Activated CD8-positive, alpha-beta T cell treated with anti-CD3 and anti-CD28 coated beads for 36 hours (primary cell): ENCODE measurements at regions of chr7 and their contacts with region 1.

Region 1: GRCh38 chr7:87416682-87417587 is 58.5 kb downstream of the ABCB4 start:
- DNase-seq: peak; percentile 85
- ATAC-seq: peak; percentile 66
- H3K4me3 Mint-ChIP-seq: no peak overlapping the region
- H3K27ac Mint-ChIP-seq: no peak overlapping the region
- H3K4me1 Mint-ChIP-seq: no peaks in the 10 kb centered on the region
- H3K27me3 Mint-ChIP-seq: peaks cover 1% of the 10 kb centered on the region
- CTCF ChIP-seq: peak; percentile 73

Region 2: GRCh38 chr7:86926732-86927131 is 490.2 kb before region 1 on chr7:
- CTCF ChIA-PET with region 1: interaction called, 13 read pairs
- POLR2A ChIA-PET with region 1: no interaction called
- intact Hi-C with region 1: loop called (anchors 10 kb)
- DNase-seq: peak; percentile 42
- ATAC-seq: peak; percentile 64
- H3K4me3 Mint-ChIP-seq: no peak overlapping the region
- H3K27ac Mint-ChIP-seq: no peak overlapping the region
- H3K4me1 Mint-ChIP-seq: peaks cover 9% of the 10 kb centered on the region
- H3K27me3 Mint-ChIP-seq: peaks cover 10% of the 10 kb centered on the region
- CTCF ChIP-seq: peak; percentile 77

Region 3: GRCh38 chr7:86939197-86939814 is 477.6 kb before region 1 on chr7:
- CTCF ChIA-PET with region 1: no interaction called
- POLR2A ChIA-PET with region 1: no interaction called
- intact Hi-C with region 1: loop called (anchors 10 kb)
- DNase-seq: peak; percentile 59
- ATAC-seq: peak; percentile 67
- H3K4me3 Mint-ChIP-seq: no peak overlapping the region
- H3K27ac Mint-ChIP-seq: no peak overlapping the region
- H3K4me1 Mint-ChIP-seq: no peaks in the 10 kb centered on the region
- H3K27me3 Mint-ChIP-seq: no peaks in the 10 kb centered on the region
- CTCF ChIP-seq: peak; percentile 81

Region 4: DNA sequence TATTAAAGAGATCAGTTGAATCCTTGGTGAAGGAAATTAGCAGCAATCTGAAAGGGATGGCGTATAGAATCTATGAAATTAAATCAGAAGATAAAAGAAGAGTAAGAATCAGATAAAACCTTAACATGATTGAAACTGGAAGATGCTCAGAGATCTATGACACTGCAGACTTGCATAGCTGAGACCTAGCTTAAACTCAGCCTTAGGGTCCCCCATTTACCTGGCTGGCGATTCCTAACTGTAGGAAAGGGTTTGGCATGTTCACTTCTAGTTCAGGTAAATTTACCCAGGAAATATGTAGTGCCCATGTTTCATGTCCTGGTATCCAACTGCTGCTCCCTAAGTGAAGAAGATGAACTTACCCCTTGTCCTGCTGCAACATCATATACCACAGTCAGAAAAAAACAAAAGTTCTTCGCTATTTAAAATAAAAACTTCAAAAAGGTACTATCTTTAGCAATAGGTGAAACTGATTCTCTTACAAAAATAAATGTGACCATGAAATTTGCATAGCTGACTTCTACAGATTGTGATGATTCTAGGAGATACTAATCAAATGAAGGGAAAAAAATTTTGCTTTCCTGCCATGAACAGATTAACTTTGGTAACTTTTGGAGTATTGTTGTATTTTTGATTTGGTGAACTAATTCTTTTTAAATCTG is 149.6 kb before region 1 on chr7:
- CTCF ChIA-PET with region 1: no interaction called
- POLR2A ChIA-PET with region 1: no interaction called
- intact Hi-C with region 1: no loop called
- DNase-seq: no peak
- ATAC-seq: no peak
- H3K4me3 Mint-ChIP-seq: no peak overlapping the region
- H3K27ac Mint-ChIP-seq: no peak overlapping the region
- H3K4me1 Mint-ChIP-seq: peaks cover 1% of the 10 kb centered on the region
- H3K27me3 Mint-ChIP-seq: peaks cover 17% of the 10 kb centered on the region
- CTCF ChIP-seq: no peak

Region 5: GRCh38 chr7:87312215-87312865 is 104.6 kb before region 1 on chr7:
- CTCF ChIA-PET with region 1: interaction called, 97 read pairs
- POLR2A ChIA-PET with region 1: no interaction called
- intact Hi-C with region 1: loop called (anchors 1 kb)
- DNase-seq: peak; percentile 64
- ATAC-seq: peak; percentile 94
- H3K4me3 Mint-ChIP-seq: no peak overlapping the region
- H3K27ac Mint-ChIP-seq: no peak overlapping the region
- H3K4me1 Mint-ChIP-seq: peaks cover 9% of the 10 kb centered on the region
- H3K27me3 Mint-ChIP-seq: peaks cover 2% of the 10 kb centered on the region
- CTCF ChIP-seq: peak; percentile 96

Region 6: GRCh38 chr7:87345962-87346371 is 71.0 kb before region 1 on chr7:
- CTCF ChIA-PET with region 1: interaction called, 19 read pairs
- POLR2A ChIA-PET with region 1: no interaction called
- intact Hi-C with region 1: no loop called
- DNase-seq: no peak
- ATAC-seq: peak; percentile 8
- H3K4me3 Mint-ChIP-seq: peak overlapping the region; percentile 93
- H3K27ac Mint-ChIP-seq: peak overlapping the region; percentile 90
- H3K4me1 Mint-ChIP-seq: peaks cover 34% of the 10 kb centered on the region
- H3K27me3 Mint-ChIP-seq: no peaks in the 10 kb centered on the region
- CTCF ChIP-seq: no peak

Region 7: GRCh38 chr7:87404674-87405073 is 12.3 kb before region 1 on chr7:
- CTCF ChIA-PET with region 1: interaction called, 24 read pairs
- POLR2A ChIA-PET with region 1: no interaction called
- intact Hi-C with region 1: no loop called
- DNase-seq: no peak
- ATAC-seq: no peak
- H3K4me3 Mint-ChIP-seq: no peak overlapping the region
- H3K27ac Mint-ChIP-seq: no peak overlapping the region
- H3K4me1 Mint-ChIP-seq: no peaks in the 10 kb centered on the region
- H3K27me3 Mint-ChIP-seq: no peaks in the 10 kb centered on the region
- CTCF ChIP-seq: no peak

Region 8: DNA sequence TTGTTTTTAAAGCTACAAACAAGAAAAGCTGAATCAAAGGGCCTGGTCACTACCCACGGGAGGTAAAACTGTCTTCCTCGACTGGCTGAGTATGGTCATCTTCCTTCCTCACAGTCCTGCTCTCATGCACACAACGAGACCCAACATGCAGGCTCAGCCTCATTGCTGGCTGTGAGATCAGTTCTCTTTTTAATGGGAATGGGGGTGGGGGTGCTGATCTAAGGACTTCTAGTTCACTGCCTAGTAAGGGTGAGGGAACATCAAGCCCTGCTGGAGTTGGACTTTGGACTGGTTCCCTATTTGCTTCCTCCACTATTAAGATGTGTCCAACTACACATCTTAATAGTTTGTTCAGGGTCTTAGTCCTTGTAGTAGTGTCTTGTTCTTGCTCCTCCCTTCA is 10.4 kb after region 1 on chr7:
- CTCF ChIA-PET with region 1: interaction called, 19 read pairs
- POLR2A ChIA-PET with region 1: interaction called, 3 read pairs
- intact Hi-C with region 1: no loop called
- DNase-seq: no peak
- ATAC-seq: no peak
- H3K4me3 Mint-ChIP-seq: no peak overlapping the region
- H3K27ac Mint-ChIP-seq: no peak overlapping the region
- H3K4me1 Mint-ChIP-seq: no peaks in the 10 kb centered on the region
- H3K27me3 Mint-ChIP-seq: peaks cover 6% of the 10 kb centered on the region
- CTCF ChIP-seq: no peak

Region 9: DNA sequence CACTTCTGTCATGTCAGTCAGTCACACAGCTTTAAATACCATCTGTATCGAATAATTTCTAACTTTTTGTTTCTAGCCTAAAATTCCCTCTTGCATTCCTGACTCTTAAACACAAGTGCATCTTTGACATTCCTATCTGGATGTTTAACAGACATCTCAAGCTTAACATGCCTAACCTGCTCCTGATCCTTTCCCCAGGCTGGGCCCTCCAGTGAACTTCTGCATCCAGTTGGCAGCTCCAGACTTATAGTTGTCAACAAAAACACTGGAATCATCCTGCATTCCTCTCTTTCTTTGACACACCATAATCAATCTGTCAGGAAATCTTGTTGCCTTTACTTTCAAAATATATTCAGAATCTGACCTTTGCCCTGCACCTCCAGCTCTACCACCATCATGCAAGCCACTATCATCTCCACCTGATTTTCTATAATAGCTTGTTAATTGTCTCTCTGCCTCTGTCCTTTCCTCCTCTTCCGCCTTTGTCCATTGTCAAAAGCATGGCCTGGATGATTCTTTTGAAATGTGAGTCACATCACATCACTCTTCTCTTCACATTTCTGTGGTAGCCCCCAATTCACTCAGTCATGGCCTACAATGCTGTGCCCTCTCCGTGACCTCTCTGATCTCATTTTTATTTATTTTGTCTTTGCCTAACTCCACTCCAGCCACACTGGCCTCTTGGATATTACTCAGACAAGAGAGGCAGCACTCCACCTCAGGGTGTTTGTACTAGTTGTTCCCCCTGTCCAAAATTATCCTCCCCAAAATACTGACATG is 63.3 kb after region 1 on chr7:
- CTCF ChIA-PET with region 1: no interaction called
- POLR2A ChIA-PET with region 1: no interaction called
- intact Hi-C with region 1: no loop called
- DNase-seq: no peak
- ATAC-seq: no peak
- H3K4me3 Mint-ChIP-seq: no peak overlapping the region
- H3K27ac Mint-ChIP-seq: no peak overlapping the region
- H3K4me1 Mint-ChIP-seq: peaks cover under 1% of the 10 kb centered on the region
- H3K27me3 Mint-ChIP-seq: peaks cover 31% of the 10 kb centered on the region
- CTCF ChIP-seq: no peak